ENCODE measurements at regions of chr4 and their contacts with region 1.

Region 1: GRCh38 chr4:74133786-74134499 is 24.0 kb upstream of the MTHFD2L start:
- DNase-seq: peak in 6 of 9 donors; percentile 8 to 43 (median 20)
- ATAC-seq: peak; percentile 65
- H3K4me3 ChIP-seq: no peak overlapping the region
- H3K4me3 Mint-ChIP-seq: no peak overlapping the region
- H3K27ac ChIP-seq: no peak overlapping the region
- H3K27ac Mint-ChIP-seq: no peak overlapping the region
- H3K4me1 ChIP-seq: no peaks in the 10 kb centered on the region
- H3K4me1 Mint-ChIP-seq: no peaks in the 10 kb centered on the region
- H3K27me3 ChIP-seq: no peaks in the 10 kb centered on the region
- H3K27me3 Mint-ChIP-seq: peaks cover 5 to 28% (median 12%) of the 10 kb centered on the region in 5 donors

Region 2: GRCh38 chr4:72701987-72702819 is 1431.7 kb before region 1 on chr4:
- CTCF ChIA-PET with region 1: no interaction called
- POLR2A ChIA-PET with region 1: no interaction called
- intact Hi-C with region 1: loop called (anchors 5 to 10 kb)
- DNase-seq: peak in 6 of 9 donors; percentile 10 to 32 (median 22)
- ATAC-seq: peak; percentile 56
- H3K4me3 ChIP-seq: no peak overlapping the region
- H3K4me3 Mint-ChIP-seq: peak overlapping the region in 9 of 10 donors; percentile 42 to 85 (median 83)
- H3K27ac ChIP-seq: no peak overlapping the region
- H3K27ac Mint-ChIP-seq: peak overlapping the region in 2 of 9 donors; percentile 3 to 71
- H3K4me1 ChIP-seq: no peaks in the 10 kb centered on the region
- H3K4me1 Mint-ChIP-seq: peaks cover 0 to 6% (median 0%) of the 10 kb centered on the region in 7 donors
- H3K27me3 ChIP-seq: no peaks in the 10 kb centered on the region
- H3K27me3 Mint-ChIP-seq: peaks cover 0 to 14% (median 6%) of the 10 kb centered on the region in 5 donors

Region 3: GRCh38 chr4:73311428-73311827 is 822.5 kb before region 1 on chr4:
- CTCF ChIA-PET with region 1: interaction called, 3 read pairs
- POLR2A ChIA-PET with region 1: no interaction called
- intact Hi-C with region 1: loop called (anchors 1 to 2 kb)
- DNase-seq: peak in 1 of 9 donors; percentile 4
- ATAC-seq: no peak
- H3K4me3 ChIP-seq: no peak overlapping the region
- H3K4me3 Mint-ChIP-seq: no peak overlapping the region
- H3K27ac ChIP-seq: no peak overlapping the region
- H3K27ac Mint-ChIP-seq: no peak overlapping the region
- H3K4me1 ChIP-seq: no peaks in the 10 kb centered on the region
- H3K4me1 Mint-ChIP-seq: peaks cover 0 to 4% (median 0%) of the 10 kb centered on the region in 7 donors
- H3K27me3 ChIP-seq: no peaks in the 10 kb centered on the region
- H3K27me3 Mint-ChIP-seq: no peaks in the 10 kb centered on the region

Region 4: GRCh38 chr4:73593631-73594241 is 540.2 kb before region 1 on chr4:
- CTCF ChIA-PET with region 1: no interaction called
- POLR2A ChIA-PET with region 1: no interaction called
- intact Hi-C with region 1: loop called in 1 of 2 experiments (anchors 5 kb)
- DNase-seq: peak in 1 of 9 donors; percentile 15
- ATAC-seq: no peak
- H3K4me3 ChIP-seq: no peak overlapping the region
- H3K4me3 Mint-ChIP-seq: no peak overlapping the region
- H3K27ac ChIP-seq: no peak overlapping the region
- H3K27ac Mint-ChIP-seq: no peak overlapping the region
- H3K4me1 ChIP-seq: no peaks in the 10 kb centered on the region
- H3K4me1 Mint-ChIP-seq: no peaks in the 10 kb centered on the region
- H3K27me3 ChIP-seq: no peaks in the 10 kb centered on the region
- H3K27me3 Mint-ChIP-seq: peaks cover 0 to 8% (median 0%) of the 10 kb centered on the region in 5 donors

Region 5: DNA sequence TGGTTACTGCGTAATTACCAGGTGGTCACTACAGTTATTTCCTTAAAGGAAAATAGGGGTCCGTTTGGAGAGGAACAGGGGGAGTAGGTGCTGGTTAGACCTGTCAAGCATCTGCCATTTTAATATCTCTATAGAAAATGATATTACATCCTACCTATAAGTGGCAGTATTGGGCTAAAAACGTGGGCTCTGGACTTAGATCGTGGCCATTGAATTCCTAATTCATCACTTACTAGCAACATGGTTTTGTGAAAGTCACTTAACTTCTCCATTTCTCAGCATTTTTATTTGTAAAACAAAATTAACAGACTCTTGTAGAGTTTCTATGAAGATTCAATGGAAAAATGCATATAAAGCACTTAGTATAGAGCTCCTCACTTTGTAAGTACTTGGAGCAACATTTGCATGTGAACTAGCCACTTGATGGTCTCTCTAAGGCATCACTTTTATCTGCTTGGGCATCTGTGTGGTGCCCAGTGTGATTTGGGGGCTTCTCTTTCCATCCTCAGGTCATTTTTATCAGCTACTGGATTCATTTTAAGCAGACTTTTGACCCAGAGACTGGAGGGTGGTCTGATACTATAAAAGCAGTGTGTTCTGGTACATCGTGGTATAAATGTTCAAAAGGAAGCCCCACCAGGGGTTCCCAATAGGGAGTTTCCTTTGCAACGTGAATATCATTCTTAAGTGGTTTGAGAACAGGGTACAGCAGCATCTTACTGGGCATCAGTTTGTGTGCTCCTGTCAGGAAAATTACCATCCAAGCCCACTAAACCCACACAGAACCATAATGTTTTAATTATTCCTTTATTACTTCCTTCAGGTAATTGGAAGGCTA is 471.0 kb before region 1 on chr4:
- CTCF ChIA-PET with region 1: no interaction called
- POLR2A ChIA-PET with region 1: no interaction called
- intact Hi-C with region 1: loop called in 1 of 2 experiments (anchors 2 kb)
- DNase-seq: no peak
- ATAC-seq: peak; percentile 61
- H3K4me3 ChIP-seq: no peak overlapping the region
- H3K4me3 Mint-ChIP-seq: no peak overlapping the region
- H3K27ac ChIP-seq: no peak overlapping the region
- H3K27ac Mint-ChIP-seq: no peak overlapping the region
- H3K4me1 ChIP-seq: no peaks in the 10 kb centered on the region
- H3K4me1 Mint-ChIP-seq: no peaks in the 10 kb centered on the region
- H3K27me3 ChIP-seq: no peaks in the 10 kb centered on the region
- H3K27me3 Mint-ChIP-seq: peaks cover 0 to 11% (median 7%) of the 10 kb centered on the region in 5 donors

Region 6: GRCh38 chr4:73729534-73730165 is 404.3 kb before region 1 on chr4:
- CTCF ChIA-PET with region 1: no interaction called
- POLR2A ChIA-PET with region 1: no interaction called
- intact Hi-C with region 1: loop called in 1 of 2 experiments (anchors 2 kb)
- DNase-seq: peak in 1 of 9 donors; percentile 2
- ATAC-seq: peak; percentile 58
- H3K4me3 ChIP-seq: no peak overlapping the region
- H3K4me3 Mint-ChIP-seq: no peak overlapping the region
- H3K27ac ChIP-seq: no peak overlapping the region
- H3K27ac Mint-ChIP-seq: no peak overlapping the region
- H3K4me1 ChIP-seq: no peaks in the 10 kb centered on the region
- H3K4me1 Mint-ChIP-seq: peaks cover 0 to 12% (median 0%) of the 10 kb centered on the region in 7 donors
- H3K27me3 ChIP-seq: no peaks in the 10 kb centered on the region
- H3K27me3 Mint-ChIP-seq: peaks cover 0 to 18% (median 14%) of the 10 kb centered on the region in 5 donors

Region 7: DNA sequence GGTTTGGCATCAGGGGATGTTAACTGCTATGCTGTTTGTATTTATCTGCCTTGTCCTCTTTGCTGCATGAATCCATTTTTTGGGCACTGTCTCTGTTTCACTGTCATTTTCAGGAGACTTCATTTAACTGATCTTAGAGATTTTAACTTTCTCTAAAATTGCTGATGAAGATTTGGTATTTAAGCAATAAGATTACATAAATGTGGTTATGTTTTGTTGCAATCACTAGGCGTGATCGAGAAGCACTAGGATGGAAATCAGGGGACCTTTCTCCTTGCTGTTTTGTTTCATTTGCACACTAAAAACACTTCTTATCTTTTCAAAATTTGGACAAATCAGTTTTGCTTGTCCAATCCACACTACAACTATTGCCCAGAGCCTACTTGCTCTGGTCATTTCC is 50.4 kb before region 1 on chr4:
- CTCF ChIA-PET with region 1: no interaction called
- POLR2A ChIA-PET with region 1: no interaction called
- intact Hi-C with region 1: no loop called
- DNase-seq: no peak
- ATAC-seq: no peak
- H3K4me3 ChIP-seq: no peak overlapping the region
- H3K4me3 Mint-ChIP-seq: no peak overlapping the region
- H3K27ac ChIP-seq: no peak overlapping the region
- H3K27ac Mint-ChIP-seq: no peak overlapping the region
- H3K4me1 ChIP-seq: no peaks in the 10 kb centered on the region
- H3K4me1 Mint-ChIP-seq: peaks cover 0 to 5% (median 0%) of the 10 kb centered on the region in 7 donors
- H3K27me3 ChIP-seq: no peaks in the 10 kb centered on the region
- H3K27me3 Mint-ChIP-seq: peaks cover 0 to 19% (median 12%) of the 10 kb centered on the region in 5 donors

Region 8: DNA sequence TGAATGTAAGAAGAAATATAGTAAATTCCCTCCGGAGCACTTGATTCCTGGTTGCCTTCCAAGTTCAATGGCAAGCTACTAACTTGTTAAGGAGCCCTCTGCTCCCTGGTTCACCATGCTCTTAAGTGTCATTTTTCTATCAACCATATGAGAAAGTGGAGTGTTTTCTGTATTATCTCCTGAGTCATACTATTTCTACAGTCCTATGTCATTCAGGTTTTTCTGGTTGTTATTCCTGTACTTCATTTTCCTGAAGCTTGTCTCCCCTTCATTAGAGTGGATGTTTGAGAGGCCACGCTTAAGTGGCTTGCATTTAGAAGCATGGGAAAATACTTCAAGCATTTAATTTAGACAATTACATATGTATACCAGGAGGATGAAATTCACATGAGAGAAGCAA is 159.6 kb after region 1 on chr4:
- CTCF ChIA-PET with region 1: no interaction called
- POLR2A ChIA-PET with region 1: no interaction called
- intact Hi-C with region 1: no loop called
- DNase-seq: no peak
- ATAC-seq: no peak
- H3K4me3 ChIP-seq: no peak overlapping the region
- H3K4me3 Mint-ChIP-seq: no peak overlapping the region
- H3K27ac ChIP-seq: no peak overlapping the region
- H3K27ac Mint-ChIP-seq: no peak overlapping the region
- H3K4me1 ChIP-seq: no peaks in the 10 kb centered on the region
- H3K4me1 Mint-ChIP-seq: no peaks in the 10 kb centered on the region
- H3K27me3 ChIP-seq: no peaks in the 10 kb centered on the region
- H3K27me3 Mint-ChIP-seq: peaks cover 0 to 4% (median 0%) of the 10 kb centered on the region in 5 donors